Mammary epithelial cell (primary cell): ENCODE measurements at regions of chr9 and their contacts with region 1.

Region 1: DNA sequence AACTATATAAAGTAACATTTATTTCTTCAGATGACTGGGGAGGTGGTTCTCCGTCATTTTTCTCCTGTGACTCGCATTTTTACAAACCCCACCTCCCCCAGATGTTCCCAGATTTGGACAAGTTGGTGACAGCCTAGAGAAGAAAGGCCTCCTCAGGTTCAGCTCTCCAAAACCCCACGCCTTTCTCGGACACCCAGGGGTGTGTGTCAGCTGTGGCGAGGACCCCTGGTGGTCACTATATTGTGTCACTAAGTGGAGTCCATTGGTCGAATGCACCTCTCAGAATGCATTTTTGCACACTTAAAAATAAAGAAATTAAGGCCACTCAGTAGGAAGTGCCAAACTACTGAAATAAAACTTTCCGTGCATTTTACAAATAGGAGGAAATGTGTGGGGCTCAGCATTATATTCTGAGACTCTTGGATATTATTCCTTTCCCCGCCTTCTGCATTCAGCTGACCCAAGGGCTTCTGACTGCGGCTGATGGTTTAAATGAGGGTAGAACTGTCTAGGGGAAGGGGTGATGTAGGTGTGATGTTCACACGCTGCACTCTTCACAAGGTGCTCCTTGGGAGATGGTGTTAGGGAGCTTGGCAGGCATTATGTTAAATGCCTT is 47.6 kb downstream of the ACO1 start:
- DNase-seq: peak; percentile 4
- H3K4me3 ChIP-seq: no peak overlapping the region
- H3K27ac ChIP-seq: no peak overlapping the region
- H3K4me1 ChIP-seq: peaks cover 5% of the 10 kb centered on the region
- H3K27me3 ChIP-seq: no peaks in the 10 kb centered on the region
- CTCF ChIP-seq: peak; percentile 18 to 46

Region 2: GRCh38 chr9:32378993-32379729 is 52.9 kb before region 1 on chr9:
- CTCF ChIA-PET with region 1: no interaction called
- dilution Hi-C with region 1: no loop called
- in situ Hi-C with region 1: no loop called
- intact Hi-C with region 1: loop called (anchors 1 kb)
- DNase-seq: peak; percentile 68
- H3K4me3 ChIP-seq: no peak overlapping the region
- H3K27ac ChIP-seq: no peak overlapping the region
- H3K4me1 ChIP-seq: peaks cover 7% of the 10 kb centered on the region
- H3K27me3 ChIP-seq: no peaks in the 10 kb centered on the region
- CTCF ChIP-seq: peak; percentile 82 to 85

Region 3: DNA sequence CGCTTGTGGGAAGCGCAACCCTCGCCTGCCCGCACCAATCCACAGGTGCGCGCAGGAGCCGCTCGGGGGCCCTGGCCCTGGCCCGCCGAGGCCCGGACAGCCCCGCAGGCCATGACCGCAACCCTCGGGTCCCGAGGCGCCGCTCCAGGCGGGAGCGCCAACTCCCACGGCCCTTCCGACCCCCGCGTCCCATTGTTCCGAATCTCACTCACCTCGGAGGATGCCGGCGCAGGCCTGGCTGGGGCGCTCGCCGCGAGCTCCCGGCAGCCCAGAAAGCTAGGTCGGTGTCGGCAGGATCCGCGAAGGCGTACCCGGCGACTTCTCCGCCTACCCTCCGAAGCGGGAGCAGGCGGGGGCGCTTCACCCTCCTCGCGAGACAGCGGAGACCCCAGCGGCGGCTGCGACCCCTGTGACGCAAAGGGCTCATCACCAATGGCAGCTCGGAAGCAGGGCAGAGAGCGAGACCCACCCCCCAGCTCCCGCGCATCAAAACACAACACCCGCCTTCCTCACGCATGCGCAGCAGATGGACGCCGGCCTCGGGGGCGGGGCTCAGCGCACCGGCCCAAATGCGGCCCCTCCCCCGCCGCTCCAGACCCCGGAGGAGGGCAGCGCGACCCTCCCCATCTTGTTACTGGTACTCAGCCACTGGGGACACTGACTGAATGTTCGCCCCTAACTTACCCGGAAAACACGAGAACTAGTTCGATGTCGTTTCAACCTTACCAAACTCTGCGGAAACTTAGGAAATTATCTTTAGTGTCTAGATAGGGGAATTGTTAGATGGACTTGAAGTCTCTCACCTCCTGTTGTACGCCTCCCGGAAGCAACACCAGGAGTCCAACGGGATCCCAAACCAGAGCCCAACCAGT is 118.8 kb after region 1 on chr9:
- CTCF ChIA-PET with region 1: no interaction called
- dilution Hi-C with region 1: loop called (anchors 25 kb)
- in situ Hi-C with region 1: no loop called
- intact Hi-C with region 1: no loop called
- DNase-seq: peak; percentile 77
- H3K4me3 ChIP-seq: peak overlapping the region; percentile 85 to 99 (median 91)
- H3K27ac ChIP-seq: peak overlapping the region; percentile 96
- H3K4me1 ChIP-seq: peaks cover 9% of the 10 kb centered on the region
- H3K27me3 ChIP-seq: no peaks in the 10 kb centered on the region
- CTCF ChIP-seq: peak in 1 of 2 donors; percentile 15